Left cardiac atrium (tissue), 4 donors: ENCODE measurements at regions of chr9 and their contacts with region 1.

Region 1: DNA sequence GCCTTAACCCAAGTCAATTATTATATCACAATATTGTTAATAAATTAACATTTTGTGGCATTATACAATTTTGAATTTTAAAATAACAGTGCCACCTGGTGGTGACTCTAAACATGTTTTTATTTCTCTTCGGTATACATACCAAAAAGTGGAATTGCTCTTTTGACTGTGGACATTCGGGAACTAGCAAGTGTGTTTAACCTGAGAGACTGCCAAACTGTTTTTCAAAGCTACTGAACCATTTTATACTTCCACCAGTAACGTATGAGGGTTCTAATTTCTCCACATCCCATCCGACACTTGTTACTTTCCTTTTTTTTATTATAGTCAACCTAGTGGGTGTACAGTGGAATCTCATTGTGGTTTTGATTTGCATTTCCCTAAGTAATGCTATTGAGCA is 18.3 kb upstream of the HSDL2 start:
- DNase-seq: no peak
- ATAC-seq: peak; percentile 34 to 51

Region 2: GRCh38 chr9:112086627-112087026 is 275.0 kb before region 1 on chr9:
- intact Hi-C with region 1: loop called in 1 of 2 experiments (anchors 2 kb)
- DNase-seq: no peak
- ATAC-seq: no peak

Region 3: DNA sequence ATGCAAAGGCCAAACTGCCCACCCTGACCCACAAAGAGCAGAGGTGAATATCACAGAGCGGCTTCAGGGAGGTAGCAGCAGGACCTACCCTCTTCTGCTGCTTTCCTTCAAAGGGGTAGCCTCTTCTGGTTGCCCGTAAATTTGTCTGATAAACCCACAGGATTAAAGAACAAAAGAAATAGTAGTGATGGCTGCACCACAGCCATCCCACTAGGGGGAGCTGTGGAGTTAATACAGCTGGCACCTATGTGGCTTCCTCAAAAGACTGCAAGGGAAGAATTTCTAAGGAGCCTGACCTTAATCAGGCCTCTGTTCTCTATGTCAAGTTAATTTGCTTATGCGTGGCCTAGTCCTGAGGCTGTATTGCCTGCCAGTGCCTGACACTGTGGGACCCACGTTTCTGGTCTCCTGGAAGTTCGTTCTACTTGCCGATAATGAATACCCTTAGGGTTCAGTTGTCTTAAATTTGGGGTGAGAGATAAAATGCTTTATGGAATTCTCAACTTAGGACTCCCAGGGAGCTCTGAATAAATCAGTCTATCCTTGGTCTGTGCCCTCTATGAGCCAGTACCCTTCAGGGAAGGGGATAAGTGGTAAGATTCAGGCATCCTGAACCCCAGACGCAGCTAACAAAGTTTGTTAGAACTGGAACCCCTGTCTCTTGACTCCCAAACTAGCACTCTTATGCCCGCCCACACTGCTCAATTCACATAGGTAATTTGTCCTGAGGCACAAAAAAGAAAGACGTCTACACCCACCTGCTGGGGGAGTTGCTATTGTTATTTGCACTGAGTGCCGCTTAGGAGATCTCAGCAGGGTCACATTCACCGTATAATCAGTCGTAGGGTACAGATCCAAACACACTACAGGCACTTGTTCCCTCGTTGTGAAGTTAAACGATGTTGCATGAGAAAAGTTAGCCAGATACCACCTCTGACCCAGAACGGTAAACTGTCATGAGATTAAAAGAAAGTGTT is 263.6 kb before region 1 on chr9:
- intact Hi-C with region 1: loop called in 1 of 2 experiments (anchors 5 kb)
- DNase-seq: peak; percentile 53
- ATAC-seq: peak; percentile 82 to 91

Region 4: DNA sequence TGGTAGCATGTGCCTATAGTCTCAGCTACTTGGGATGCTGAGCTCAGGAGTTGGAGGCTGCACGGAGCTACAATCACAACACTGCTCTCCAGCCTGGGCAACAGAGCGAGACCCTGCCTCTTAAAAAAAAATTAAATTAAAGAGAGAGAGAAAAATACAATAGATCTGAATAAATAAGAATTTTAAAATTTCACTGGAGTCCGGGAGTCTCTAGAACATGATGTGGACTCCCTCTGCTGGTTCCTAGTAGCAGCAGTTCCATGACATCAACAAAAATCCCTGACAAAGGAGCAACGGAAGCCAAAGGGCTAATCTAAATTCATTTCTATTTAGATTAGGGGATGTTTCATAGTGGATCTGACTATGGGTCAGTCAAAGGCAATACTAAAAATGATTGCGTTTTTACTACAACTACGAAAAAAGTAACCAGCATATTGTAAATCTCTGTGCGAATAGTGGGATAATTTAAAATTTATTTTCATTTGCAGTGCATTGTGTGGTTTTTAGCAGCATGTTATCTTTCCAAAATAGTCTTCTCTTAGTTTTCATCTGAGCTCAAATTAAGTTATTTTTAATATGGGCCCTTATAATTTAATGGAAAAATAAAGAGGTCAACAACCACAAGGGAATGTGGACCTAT is 349.6 kb after region 1 on chr9:
- intact Hi-C with region 1: no loop called
- DNase-seq: no peak
- ATAC-seq: no peak